Transverse colon (tissue), 4 donors: ENCODE measurements at regions of chrX and their contacts with region 1.

Region 1: GRCh38 chrX:34275699-34276098 is 143.6 kb upstream of the FAM47A start:
- DNase-seq: no peak
- H3K4me3 ChIP-seq: no peak overlapping the region
- H3K27ac ChIP-seq: no peak overlapping the region
- H3K4me1 ChIP-seq: no peaks in the 10 kb centered on the region
- H3K27me3 ChIP-seq: no peaks in the 10 kb centered on the region
- CTCF ChIP-seq: no peak
- EP300 ChIP-seq: no peak
- POLR2A ChIP-seq: no peak

Region 2: DNA sequence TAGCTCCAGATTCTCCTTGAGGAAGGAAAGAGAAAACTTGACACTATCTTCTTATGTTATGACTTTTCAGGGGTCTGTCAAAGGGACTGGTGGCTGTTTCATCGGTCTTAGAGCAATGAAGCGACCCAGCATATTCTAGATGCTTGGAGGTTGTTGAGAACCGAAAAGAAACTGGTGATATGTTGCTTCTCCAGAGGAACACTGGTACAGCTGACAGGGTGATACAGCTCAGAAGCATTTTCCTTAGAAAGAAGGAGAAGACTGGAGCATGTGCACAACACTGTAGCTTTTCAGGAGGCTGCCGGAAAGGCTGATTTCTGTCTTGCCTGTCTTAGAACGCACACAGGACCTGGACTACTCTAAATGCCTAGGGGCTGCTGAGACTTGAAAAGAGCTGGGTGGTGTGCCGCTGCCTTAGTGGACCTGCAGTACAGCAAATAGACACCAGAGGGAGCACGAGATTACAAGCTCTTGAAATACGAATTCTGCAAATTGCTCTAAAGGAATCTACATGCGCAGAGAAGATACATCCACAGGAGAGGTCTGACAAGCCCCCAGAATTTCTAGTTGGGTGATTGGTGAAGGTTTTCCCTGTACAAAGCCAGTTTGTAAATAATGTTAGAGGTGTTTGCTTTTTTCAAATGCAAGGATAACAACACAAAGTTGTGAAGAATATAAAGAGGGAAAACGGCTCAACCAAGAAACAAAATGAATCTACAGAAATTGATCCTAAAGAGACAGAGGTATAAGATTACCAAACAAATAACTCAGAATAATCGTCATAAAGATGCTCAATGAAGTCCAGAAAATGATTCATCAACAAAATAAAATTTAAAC is 841.2 kb before region 1 on chrX:
- in situ Hi-C with region 1: loop called in 2 of 4 experiments (anchors 25 kb)
- intact Hi-C with region 1: no loop called
- DNase-seq: peak; percentile 43
- H3K4me3 ChIP-seq: no peak overlapping the region
- H3K27ac ChIP-seq: no peak overlapping the region
- H3K4me1 ChIP-seq: no peaks in the 10 kb centered on the region
- H3K27me3 ChIP-seq: no peaks in the 10 kb centered on the region
- CTCF ChIP-seq: peak; percentile 17 to 91 (median 58)
- EP300 ChIP-seq: no peak
- POLR2A ChIP-seq: no peak

Region 3: DNA sequence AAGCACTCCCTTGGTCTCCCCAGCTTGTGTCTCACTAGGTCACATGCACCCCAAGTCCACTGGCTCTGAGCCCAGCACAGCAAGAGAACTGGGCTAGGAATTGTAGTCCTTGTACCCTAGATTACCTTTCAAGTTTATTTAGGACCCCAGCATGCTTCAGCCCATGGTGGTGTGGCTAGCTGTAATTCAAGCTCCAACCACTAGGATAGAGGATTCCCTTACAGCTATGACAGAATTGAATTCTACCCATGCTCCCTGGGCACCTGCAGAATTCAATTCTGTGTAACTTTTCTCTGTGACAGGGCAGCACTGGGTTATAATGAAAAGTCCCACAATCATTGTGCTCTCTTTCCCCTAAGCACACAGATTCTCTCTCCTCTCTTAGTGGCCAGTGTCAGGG is 810.6 kb before region 1 on chrX:
- in situ Hi-C with region 1: loop called in 1 of 4 experiments (anchors 25 kb)
- intact Hi-C with region 1: no loop called
- DNase-seq: no peak
- H3K4me3 ChIP-seq: no peak overlapping the region
- H3K27ac ChIP-seq: no peak overlapping the region
- H3K4me1 ChIP-seq: no peaks in the 10 kb centered on the region
- H3K27me3 ChIP-seq: no peaks in the 10 kb centered on the region
- CTCF ChIP-seq: no peak
- EP300 ChIP-seq: no peak
- POLR2A ChIP-seq: no peak

Region 4: GRCh38 chrX:34300871-34301270 is 25.2 kb after region 1 on chrX:
- in situ Hi-C with region 1: no loop called
- intact Hi-C with region 1: no loop called
- DNase-seq: no peak
- H3K4me3 ChIP-seq: no peak overlapping the region
- H3K27ac ChIP-seq: no peak overlapping the region
- H3K4me1 ChIP-seq: no peaks in the 10 kb centered on the region
- H3K27me3 ChIP-seq: no peaks in the 10 kb centered on the region
- CTCF ChIP-seq: peak in 3 of 5 experiments; percentile 16 to 50 (median 27)
- EP300 ChIP-seq: no peak
- POLR2A ChIP-seq: no peak